Ovary (tissue), 10 donors: ENCODE measurements at regions of chr3 and their contacts with region 1.

Region 1: GRCh38 chr3:179309225-179310078 is 13.4 kb upstream of the ZNF639 start:
- DNase-seq: no peak
- H3K4me3 ChIP-seq: no peak overlapping the region
- H3K27ac ChIP-seq: no peak overlapping the region
- H3K4me1 ChIP-seq: no peaks in the 10 kb centered on the region
- H3K27me3 ChIP-seq: no peaks in the 10 kb centered on the region
- CTCF ChIP-seq: no peak
- EP300 ChIP-seq: no peak
- POLR2A ChIP-seq: no peak

Region 2: GRCh38 chr3:179100652-179101051 is 208.8 kb before region 1 on chr3:
- intact Hi-C with region 1: loop called in 1 of 4 experiments (anchors 10 kb)
- DNase-seq: no peak
- H3K4me3 ChIP-seq: no peak overlapping the region
- H3K27ac ChIP-seq: no peak overlapping the region
- H3K4me1 ChIP-seq: peaks cover 1% of the 10 kb centered on the region
- H3K27me3 ChIP-seq: no peaks in the 10 kb centered on the region
- CTCF ChIP-seq: no peak
- EP300 ChIP-seq: no peak
- POLR2A ChIP-seq: no peak

Region 3: DNA sequence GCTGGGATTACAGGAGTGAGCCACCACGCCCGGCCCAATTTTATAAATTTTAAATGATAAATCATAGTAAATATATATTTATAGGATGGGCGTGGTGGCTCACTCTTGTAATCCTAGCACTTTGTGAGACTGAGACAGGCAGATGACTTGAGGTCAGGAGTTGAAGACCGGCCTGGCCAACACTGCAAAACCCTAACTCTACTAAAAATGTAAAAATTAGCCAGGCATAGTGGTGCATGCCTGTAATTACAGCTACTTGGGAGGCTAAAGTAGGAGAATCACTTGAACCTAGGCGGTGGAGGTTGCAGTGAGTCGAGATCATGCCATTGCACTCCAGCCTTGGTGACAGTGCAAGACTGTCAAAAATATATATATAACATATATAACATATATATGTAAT is 64.5 kb after region 1 on chr3:
- intact Hi-C with region 1: no loop called
- DNase-seq: no peak
- H3K4me3 ChIP-seq: no peak overlapping the region
- H3K27ac ChIP-seq: no peak overlapping the region
- H3K4me1 ChIP-seq: no peaks in the 10 kb centered on the region
- H3K27me3 ChIP-seq: no peaks in the 10 kb centered on the region
- CTCF ChIP-seq: no peak
- EP300 ChIP-seq: no peak
- POLR2A ChIP-seq: no peak